Dorsolateral prefrontal cortex (tissue), 120 donors: ENCODE measurements at regions of chr1 and their contacts with region 1.

Region 1: DNA sequence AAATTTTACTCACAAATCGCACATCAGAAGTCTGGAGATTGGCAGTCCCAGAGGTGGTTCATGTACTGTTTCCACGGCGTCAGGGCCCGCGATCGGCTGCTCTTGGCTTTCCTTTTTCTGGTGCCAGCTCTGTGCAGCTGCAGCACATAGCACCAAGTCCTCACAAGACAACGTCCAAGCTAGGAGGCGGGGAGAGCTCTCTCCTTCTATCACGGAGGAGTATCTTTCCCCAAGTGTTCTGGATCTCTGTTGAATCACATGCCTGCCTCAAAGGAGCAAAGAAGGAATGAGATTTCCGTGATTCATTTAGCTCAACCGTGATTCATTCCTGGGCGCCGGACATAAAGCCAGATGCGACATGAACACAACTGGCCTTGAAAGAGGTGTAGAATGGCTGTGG is 25.5 kb downstream of the MT1HL1 start:
- DNase-seq: peak in 8 of 10 donors; percentile 31 to 77 (median 58)
- H3K4me3 ChIP-seq: peak overlapping the region in 6 of 59 donors; percentile 6 to 33 (median 14)
- H3K27ac ChIP-seq: peak overlapping the region in 36 of 59 donors; percentile 5 to 77 (median 50)
- H3K27me3 ChIP-seq: no peaks in the 10 kb centered on the region
- CTCF ChIP-seq: no peak

Region 2: DNA sequence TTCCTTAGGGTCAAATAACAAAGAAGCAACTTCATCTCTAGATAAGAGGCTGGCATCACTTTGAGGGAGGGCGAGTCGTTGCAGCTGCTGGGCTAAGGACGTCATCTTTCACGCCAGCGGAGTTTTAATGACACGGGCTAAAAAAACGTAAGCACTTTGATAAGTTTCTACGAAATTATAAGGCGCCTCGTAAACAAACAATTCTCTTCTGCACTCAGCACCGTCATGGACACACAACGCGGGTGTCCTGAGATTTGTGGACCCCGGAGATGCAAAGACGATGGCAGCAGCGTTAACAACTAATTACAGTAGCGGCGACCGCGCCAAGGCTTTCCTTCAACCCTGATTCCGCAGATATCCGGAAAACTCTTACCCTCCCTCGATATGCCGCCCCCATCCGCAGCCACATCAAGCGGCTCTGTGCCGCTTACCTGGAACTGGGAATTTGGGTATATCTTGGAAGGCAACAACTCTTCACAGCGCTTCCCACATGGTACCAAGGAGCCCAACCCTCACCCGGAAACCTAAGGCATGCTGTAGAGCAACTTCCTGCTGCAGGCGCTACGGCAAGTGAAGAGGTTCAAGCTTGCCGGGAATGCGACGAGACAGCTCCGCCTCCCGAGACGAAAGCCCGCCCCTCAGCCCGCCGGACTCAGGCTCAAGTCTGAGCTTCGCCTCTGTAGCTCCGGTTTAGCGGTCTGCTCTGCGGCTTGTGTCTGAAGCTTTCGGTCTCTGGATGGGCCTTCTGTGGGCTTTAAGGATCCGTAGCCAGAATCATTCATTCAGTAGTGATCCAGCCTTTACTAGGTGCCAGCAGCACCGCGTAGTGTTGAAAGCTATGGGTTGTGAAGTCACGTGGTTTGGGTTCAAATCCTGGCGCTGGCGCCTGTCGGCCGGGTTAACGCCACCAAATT is 374.5 kb before region 1 on chr1 and contains the start of gene HEATR1:
- intact Hi-C with region 1: no loop called
- DNase-seq: peak; percentile 89 to 97 (median 94)
- H3K4me3 ChIP-seq: peak within 1 kb of the TSS; percentile 72 to 99 (median 90)
- H3K27ac ChIP-seq: peak within 1 kb of the TSS in 58 of 59 donors; percentile 19 to 95 (median 85)
- H3K27me3 ChIP-seq: peaks cover 0 to 4% (median 0%) of the 10 kb centered on the region in 45 donors
- CTCF ChIP-seq: peak in 46 of 56 donors; percentile 11 to 69 (median 42)
- total RNA-seq, gene HEATR1: 17.4 to 37.1 (median 25.8) TPM

Region 3: GRCh38 chr1:236938760-236939159 is 40.0 kb before region 1 on chr1:
- intact Hi-C with region 1: loop called in 1 of 2 experiments (anchors 2 kb)
- DNase-seq: peak in 5 of 10 donors; percentile 49 to 67 (median 57)
- H3K4me3 ChIP-seq: no peak overlapping the region
- H3K27ac ChIP-seq: peak overlapping the region in 18 of 59 donors; percentile 5 to 66 (median 45)
- H3K27me3 ChIP-seq: no peaks in the 10 kb centered on the region
- CTCF ChIP-seq: no peak